GM12878 (cell line): ENCODE measurements at regions of chr10 and their contacts with region 1.

Region 1: DNA sequence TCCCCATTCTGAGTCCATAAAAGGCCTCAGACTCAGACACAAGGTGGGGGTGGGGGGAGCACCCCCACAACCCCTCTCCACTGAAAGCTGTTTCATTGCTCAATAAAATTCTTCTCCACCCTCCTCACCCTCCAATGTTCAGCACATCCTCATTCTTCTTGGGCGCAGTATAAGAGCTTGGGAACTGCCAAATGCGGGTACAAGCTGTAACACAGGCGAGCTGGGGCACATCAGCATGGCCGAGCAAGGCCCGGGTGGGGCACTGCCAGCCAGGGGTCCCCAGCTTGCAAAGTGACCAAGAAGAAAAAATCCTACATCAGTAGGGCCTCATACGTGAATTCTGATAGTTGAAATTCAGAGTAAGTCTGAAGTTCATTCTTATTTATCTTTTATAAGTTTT is 50.1 kb downstream of the CACUL1 start:
- DNase-seq: no peak
- ATAC-seq: no peak
- H3K4me3 ChIP-seq: no peak overlapping the region
- H3K27ac ChIP-seq: no peak overlapping the region
- H3K4me1 ChIP-seq: no peaks in the 10 kb centered on the region
- H3K27me3 ChIP-seq: no peaks in the 10 kb centered on the region
- CTCF ChIP-seq: no peak
- EP300 ChIP-seq: no peak
- POLR2A ChIP-seq: no peak
- RAD21 ChIP-seq: no peak

Region 2: GRCh38 chr10:118692872-118693271 is 11.8 kb before region 1 on chr10:
- CTCF ChIA-PET with region 1: interaction called, 4 read pairs
- POLR2A ChIA-PET with region 1: no interaction called
- RAD21 ChIA-PET with region 1: no interaction called
- SMC1A ChIA-PET with region 1: interaction called, 12 read pairs
- in situ Hi-C with region 1: no loop called
- intact Hi-C with region 1: no loop called
- DNase-seq: no peak
- ATAC-seq: no peak
- H3K4me3 ChIP-seq: no peak overlapping the region
- H3K27ac ChIP-seq: no peak overlapping the region
- H3K4me1 ChIP-seq: no peaks in the 10 kb centered on the region
- H3K27me3 ChIP-seq: no peaks in the 10 kb centered on the region
- CTCF ChIP-seq: no peak
- EP300 ChIP-seq: no peak
- POLR2A ChIP-seq: no peak
- RAD21 ChIP-seq: no peak